ENCODE measurements at regions of chr9 and their contacts with region 1.

Region 1: DNA sequence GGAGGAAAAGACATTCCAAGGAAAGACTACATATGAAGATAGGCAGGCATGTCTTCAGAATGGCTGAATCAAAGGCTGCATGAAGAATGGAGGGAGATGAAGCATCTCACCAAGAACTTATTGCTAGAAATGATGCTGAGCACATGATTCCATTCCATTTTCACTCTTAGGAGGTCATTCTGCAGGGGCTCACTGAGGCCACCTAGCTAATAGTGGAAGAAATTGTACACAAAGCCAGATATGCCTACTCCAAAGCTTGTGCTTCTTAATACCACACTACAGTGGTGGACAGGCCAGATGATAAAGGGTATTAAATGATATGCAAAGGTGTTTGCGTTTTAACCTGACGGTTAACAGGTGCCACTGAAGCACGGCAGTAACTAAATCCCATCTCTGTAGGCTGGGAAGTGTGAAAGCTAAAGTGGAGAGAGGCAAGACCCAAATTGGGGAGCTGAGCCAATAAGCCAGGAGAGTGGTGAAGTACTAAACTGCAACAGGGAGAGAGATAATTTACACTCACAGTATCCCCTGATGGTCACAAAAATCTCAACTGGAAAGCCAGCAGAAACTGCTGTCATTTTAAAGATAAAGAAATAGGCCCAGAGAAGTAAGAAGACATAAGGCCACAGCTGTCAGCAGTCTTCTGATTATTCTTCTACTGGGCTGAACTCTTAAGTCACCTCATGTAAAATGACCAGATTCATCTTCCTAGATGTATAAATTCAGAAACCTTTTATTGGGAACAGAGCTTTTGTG is 14.6 kb downstream of the NDUFA8 start:
- DNase-seq: no peak
- H3K4me3 ChIP-seq: no peak overlapping the region
- H3K27ac ChIP-seq: no peak overlapping the region
- H3K27me3 ChIP-seq: no peaks in the 10 kb centered on the region
- CTCF ChIP-seq: peak; percentile 45

Region 2: DNA sequence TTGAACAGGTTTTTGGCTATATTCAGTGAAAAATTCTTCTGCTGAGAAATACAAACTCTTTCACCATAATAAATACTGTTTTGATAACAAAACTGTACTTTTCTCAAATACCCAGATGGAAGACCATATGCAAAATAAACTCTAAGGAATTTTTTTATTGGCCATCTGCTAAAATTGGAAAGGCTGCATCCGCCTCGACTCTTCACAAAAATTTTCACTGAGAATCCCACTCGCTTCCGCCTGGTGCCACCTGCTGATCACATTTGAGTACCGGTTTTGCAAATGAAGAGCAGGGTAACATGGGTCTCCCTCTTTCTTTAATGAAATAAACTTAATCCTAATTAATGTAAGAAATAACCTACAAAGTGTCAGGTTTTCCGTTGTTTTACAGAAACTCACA is 128.3 kb before region 1 on chr9:
- CTCF ChIA-PET with region 1: no interaction called
- POLR2A ChIA-PET with region 1: no interaction called
- DNase-seq: no peak
- H3K4me3 ChIP-seq: no peak overlapping the region
- H3K27ac ChIP-seq: no peak overlapping the region
- H3K27me3 ChIP-seq: no peaks in the 10 kb centered on the region
- CTCF ChIP-seq: peak; percentile 40

Region 3: DNA sequence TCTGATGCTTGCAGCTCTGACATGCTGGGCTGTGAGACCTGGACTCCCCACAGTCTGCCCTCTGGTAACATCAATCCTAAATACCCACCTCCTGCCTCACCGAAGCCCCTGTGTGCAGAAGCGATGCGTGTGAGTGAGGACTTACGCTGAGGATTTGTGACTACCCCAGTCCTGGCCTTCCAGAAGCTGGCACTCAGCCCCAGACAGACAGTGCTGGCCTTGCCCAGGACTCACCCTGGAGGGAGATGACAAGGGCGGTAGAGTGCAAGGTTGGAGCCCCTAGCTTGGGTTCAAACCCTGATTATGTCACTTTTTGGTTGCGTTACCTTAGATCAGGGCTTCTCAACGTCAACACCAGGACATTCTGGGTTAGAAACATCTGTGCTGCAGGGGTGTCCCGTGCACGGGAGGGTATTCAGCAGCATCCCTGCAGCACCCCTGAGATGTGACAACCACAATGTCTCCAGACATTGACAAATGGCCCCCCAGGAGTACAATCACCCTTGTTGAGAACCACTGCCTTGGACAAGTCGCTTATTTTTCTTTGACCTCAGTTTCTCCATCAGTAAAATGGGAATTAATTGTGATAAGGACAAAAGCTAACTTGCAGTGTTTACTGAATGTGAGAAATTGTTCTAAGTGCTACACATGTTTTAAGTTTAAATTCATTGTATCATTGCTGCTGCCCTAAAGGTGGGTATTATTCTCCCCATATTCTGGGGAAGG is 28.4 kb before region 1 on chr9:
- CTCF ChIA-PET with region 1: no interaction called
- POLR2A ChIA-PET with region 1: no interaction called
- DNase-seq: no peak
- H3K4me3 ChIP-seq: no peak overlapping the region
- H3K27ac ChIP-seq: no peak overlapping the region
- H3K27me3 ChIP-seq: peaks cover 25% of the 10 kb centered on the region
- CTCF ChIP-seq: no peak

Region 4: DNA sequence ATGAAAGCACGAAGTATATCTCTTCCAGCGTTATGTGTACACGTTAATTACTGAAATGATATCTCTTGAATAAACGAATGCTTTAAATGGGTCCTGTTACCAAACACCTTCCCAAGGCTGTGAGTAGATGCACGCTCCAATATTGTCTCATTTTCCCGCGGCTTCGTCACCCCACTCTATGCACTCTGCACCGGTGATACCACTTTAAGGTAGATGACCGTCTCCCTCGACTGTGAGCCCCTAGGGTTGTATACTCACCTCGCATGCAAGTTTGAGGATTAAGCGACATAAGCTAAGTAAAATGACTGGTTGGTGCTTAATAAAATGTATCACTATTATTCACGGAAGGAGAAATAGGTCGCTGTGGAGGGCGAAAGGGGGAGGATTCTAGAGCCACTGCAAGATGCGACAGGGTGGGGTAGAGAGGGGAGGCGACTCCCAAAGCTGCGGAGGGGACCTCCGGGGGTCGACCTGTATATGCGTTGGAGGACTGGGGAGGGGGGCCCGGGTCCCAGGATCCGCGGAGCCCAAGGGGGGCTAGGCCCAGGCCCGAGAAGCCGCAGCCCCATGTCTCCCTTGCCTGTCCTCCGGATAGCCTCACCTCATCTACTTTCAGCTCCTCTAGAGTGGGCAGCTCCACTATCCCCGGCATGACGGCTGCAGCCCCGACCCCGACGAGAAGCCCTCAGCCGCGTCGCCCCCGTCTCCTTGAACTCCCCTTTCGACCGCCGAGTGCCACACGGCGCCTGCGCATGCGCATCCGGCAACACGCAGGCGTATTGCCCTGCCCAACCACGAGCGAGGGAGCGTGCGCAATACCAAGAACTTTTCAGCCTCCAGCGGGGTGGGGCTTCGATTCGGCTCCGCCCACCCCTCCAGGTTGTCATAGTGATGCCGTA is 14.3 kb after region 1 on chr9 and contains the starts of genes MORN5 and NDUFA8:
- CTCF ChIA-PET with region 1: interaction called, 12 read pairs
- POLR2A ChIA-PET with region 1: no interaction called
- DNase-seq: peak; percentile 92
- H3K4me3 ChIP-seq: peak within 1 kb of the TSS; percentile 99
- H3K27ac ChIP-seq: peak within 1 kb of the TSS; percentile 24
- H3K27me3 ChIP-seq: peaks cover 19% of the 10 kb centered on the region
- CTCF ChIP-seq: 0 out of 2 replicates have a peak, but pooled peaks have one; percentile 6
- polyA plus RNA-seq, gene MORN5: not detected in 2 replicates
- polyA plus RNA-seq, gene NDUFA8: 80.2 and 90.4 TPM in 2 replicates

Region 5: GRCh38 chr9:122225312-122226141 is 80.5 kb after region 1 on chr9:
- CTCF ChIA-PET with region 1: no interaction called
- POLR2A ChIA-PET with region 1: interaction called, 11 read pairs
- DNase-seq: no peak
- H3K4me3 ChIP-seq: no peak overlapping the region
- H3K27ac ChIP-seq: no peak overlapping the region
- H3K27me3 ChIP-seq: peaks cover 92% of the 10 kb centered on the region
- CTCF ChIP-seq: no peak

Region 6: GRCh38 chr9:122297512-122297911 is 152.5 kb after region 1 on chr9:
- CTCF ChIA-PET with region 1: no interaction called
- POLR2A ChIA-PET with region 1: no interaction called
- DNase-seq: no peak
- H3K4me3 ChIP-seq: no peak overlapping the region
- H3K27ac ChIP-seq: no peak overlapping the region
- H3K27me3 ChIP-seq: no peaks in the 10 kb centered on the region
- CTCF ChIP-seq: no peak

Region 7: GRCh38 chr9:122975196-122975595 is 830.2 kb after region 1 on chr9:
- CTCF ChIA-PET with region 1: no interaction called
- POLR2A ChIA-PET with region 1: no interaction called
- DNase-seq: no peak
- H3K4me3 ChIP-seq: no peak overlapping the region
- H3K27ac ChIP-seq: no peak overlapping the region
- H3K27me3 ChIP-seq: no peaks in the 10 kb centered on the region
- CTCF ChIP-seq: no peak